Naive thymus-derived CD8-positive, alpha-beta T cell (primary cell): ENCODE measurements at regions of chr12 and their contacts with region 1.

Region 1: DNA sequence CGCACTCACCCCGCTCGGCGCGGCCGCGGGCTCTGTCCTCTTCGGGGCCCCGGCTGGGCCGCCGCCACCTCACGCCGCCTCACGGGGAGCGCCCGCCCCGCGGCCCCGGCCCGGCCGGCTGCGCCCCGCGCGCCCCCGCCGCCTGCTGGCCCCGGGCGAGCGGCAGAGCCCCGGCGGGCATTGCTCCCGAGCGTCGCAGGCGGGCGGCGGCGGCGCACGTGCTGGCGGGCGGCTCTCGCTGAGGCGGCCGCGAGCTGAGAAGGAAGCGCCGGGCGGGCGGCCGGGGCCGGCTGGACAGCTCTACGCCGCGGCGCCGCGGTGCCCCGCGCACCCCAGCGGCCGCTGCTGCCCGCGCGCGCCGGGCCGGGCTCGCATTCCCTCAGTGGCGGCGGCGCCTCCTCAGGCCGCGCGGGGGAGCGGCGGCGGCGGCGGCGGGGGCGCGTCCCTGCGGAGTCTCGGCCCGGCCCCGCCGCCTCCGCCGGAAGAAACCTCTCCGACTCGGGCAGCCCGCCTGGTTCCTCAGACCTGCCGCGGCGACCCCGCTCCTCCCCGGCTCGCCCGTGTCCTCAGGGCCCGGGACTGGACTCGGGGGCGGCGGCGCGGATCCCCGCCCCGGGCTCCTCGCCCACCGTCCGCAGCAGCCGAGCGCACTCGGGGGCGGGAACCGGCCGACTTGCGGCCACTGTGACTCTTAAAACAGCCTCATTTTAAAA is at the start of gene PITPNM2:
- DNase-seq: peak; percentile 47 to 76 (median 62)
- ATAC-seq: peak; percentile 87
- H3K4me3 Mint-ChIP-seq: peak within 1 kb of the TSS; percentile 73 to 93 (median 86)
- H3K27ac Mint-ChIP-seq: peak within 1 kb of the TSS; percentile 81 to 93 (median 91)
- H3K4me1 Mint-ChIP-seq: peaks cover 30 to 50% (median 46%) of the 10 kb centered on the region in 4 donors
- H3K27me3 Mint-ChIP-seq: no peaks in the 10 kb centered on the region
- polyA plus RNA-seq, gene PITPNM2: 4.0 to 6.3 (median 4.7) TPM

Region 2: DNA sequence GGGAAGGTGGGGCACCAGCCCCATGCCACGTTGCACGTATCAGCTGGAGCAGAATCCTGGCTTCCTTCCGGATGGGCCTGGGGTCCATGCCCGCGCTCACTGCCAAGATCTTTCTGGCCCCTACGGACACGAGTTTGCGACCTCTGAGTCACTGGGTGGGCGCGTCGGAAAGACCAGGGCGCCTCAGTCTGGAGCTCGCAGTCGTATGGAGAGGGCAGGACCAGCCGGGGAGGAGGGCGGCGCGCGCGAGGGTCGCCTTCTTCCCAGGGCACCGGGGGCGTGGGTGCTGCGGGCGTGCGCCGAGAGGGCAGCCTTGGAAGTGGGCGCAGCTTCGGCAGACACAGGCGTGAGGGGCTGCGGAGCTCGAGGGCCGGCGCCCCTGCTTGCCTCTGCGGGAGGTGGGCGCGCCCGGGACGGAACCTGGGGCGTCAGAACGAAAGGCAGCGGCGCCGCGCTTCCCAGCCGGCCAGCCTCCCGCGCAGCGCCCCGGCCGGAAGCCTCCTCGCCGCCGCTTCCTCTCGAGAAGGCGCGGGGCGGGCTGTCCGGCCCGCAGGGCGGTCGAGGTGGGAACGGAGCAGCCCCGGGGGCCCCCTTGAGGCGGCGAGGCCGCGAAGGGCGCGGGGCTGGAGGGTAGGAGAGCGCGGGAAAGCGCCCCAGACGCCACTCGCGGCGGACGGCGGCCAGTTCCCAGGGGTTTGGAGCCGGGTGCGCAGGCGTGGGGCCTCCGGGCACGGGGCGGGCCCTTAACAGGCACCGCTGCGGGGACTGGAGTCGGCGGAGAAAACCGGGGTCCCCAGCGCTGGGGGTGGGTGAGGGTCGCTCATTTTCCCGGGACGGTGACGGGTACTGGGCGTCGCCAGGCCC is 170.5 kb before region 1 on chr12 and contains the start of gene ARL6IP4:
- POLR2A ChIA-PET with region 1: interaction called, 12 read pairs
- DNase-seq: peak; percentile 42 to 79 (median 60)
- ATAC-seq: peak; percentile 78
- H3K4me3 Mint-ChIP-seq: peak within 1 kb of the TSS; percentile 85 to 92 (median 89)
- H3K27ac Mint-ChIP-seq: peak within 1 kb of the TSS; percentile 75 to 93 (median 90)
- H3K4me1 Mint-ChIP-seq: peaks cover 24 to 80% (median 68%) of the 10 kb centered on the region in 4 donors
- H3K27me3 Mint-ChIP-seq: no peaks in the 10 kb centered on the region
- polyA plus RNA-seq, gene ARL6IP4: 209 to 256 (median 222) TPM

Region 3: DNA sequence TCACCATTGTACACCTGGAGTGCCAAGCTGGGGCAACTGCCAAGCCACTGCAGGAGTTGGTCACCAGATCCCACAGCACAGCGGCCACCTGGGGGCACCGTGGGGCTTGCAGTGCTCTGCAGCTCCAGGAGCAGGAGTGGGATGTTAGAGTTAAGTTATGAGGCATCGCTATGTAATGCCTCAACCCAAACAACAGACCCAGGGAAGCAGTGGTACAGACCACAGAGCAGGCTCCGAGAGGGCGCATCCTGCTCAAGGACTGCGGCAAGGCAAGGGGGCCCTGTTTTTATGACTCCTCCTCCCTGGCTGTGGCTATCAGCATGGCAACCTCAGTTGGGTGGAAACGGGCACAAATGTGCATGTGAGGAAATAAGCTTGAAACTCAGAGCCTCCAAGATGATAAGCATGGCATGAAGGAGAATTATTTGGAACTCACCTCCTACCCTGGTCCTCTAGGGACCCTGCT is 107.3 kb before region 1 on chr12:
- POLR2A ChIA-PET with region 1: interaction called, 16 read pairs
- DNase-seq: peak; percentile 42 to 89 (median 70)
- ATAC-seq: peak; percentile 98 to 99
- H3K4me3 Mint-ChIP-seq: peak overlapping the region in 9 of 10 donors; percentile 11 to 77 (median 65)
- H3K27ac Mint-ChIP-seq: peak overlapping the region; percentile 88 to 99 (median 94)
- H3K4me1 Mint-ChIP-seq: peaks cover 29 to 50% (median 47%) of the 10 kb centered on the region in 4 donors
- H3K27me3 Mint-ChIP-seq: no peaks in the 10 kb centered on the region

Region 4: DNA sequence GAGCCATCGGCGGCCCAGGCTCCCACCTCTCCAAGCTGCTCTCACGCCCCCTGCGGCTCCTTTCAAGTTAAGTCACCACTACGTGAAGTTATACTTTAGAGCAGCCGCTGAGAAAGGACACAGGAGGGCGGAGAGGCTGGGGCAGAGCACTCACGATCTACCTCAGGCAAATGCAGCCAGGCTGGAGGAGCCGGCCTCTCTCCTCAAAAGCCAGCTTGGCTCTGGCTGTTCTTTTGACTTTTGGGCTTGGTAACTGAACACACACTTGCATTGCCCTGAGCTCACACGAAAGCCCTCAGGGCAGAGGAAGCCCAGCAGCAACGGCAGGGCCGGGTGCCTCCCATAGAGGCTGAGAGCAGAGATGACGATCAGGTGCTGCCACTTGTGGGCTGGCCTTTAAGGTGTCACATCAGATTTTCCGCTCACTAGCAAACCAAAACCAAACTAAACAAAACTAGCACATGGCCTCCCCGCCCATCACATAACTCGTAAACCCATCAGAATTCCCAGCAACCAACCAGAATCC is 75.2 kb before region 1 on chr12:
- POLR2A ChIA-PET with region 1: interaction called, 47 read pairs
- DNase-seq: peak; percentile 45 to 88 (median 73)
- ATAC-seq: peak; percentile 82 to 89
- H3K4me3 Mint-ChIP-seq: peak overlapping the region; percentile 82 to 98 (median 94)
- H3K27ac Mint-ChIP-seq: peak overlapping the region; percentile 94 to 99 (median 96)
- H3K4me1 Mint-ChIP-seq: peaks cover 35 to 78% (median 72%) of the 10 kb centered on the region in 4 donors
- H3K27me3 Mint-ChIP-seq: no peaks in the 10 kb centered on the region

Region 5: GRCh38 chr12:123106628-123107359 is 44.1 kb before region 1 on chr12:
- POLR2A ChIA-PET with region 1: interaction called, 16 read pairs
- DNase-seq: peak in 9 of 10 donors; percentile 23 to 78 (median 45)
- ATAC-seq: peak; percentile 91
- H3K4me3 Mint-ChIP-seq: peak overlapping the region; percentile 43 to 84 (median 76)
- H3K27ac Mint-ChIP-seq: peak overlapping the region; percentile 89 to 97 (median 96)
- H3K4me1 Mint-ChIP-seq: peaks cover 44 to 76% (median 72%) of the 10 kb centered on the region in 4 donors
- H3K27me3 Mint-ChIP-seq: no peaks in the 10 kb centered on the region

Region 6: GRCh38 chr12:123115409-123116121 is 35.3 kb before region 1 on chr12:
- POLR2A ChIA-PET with region 1: interaction called, 66 read pairs
- DNase-seq: peak in 5 of 10 donors; percentile 22 to 75 (median 63)
- ATAC-seq: peak; percentile 85 to 87
- H3K4me3 Mint-ChIP-seq: peak overlapping the region in 9 of 10 donors; percentile 40 to 64 (median 54)
- H3K27ac Mint-ChIP-seq: peak overlapping the region; percentile 89 to 97 (median 94)
- H3K4me1 Mint-ChIP-seq: peaks cover 34 to 93% (median 78%) of the 10 kb centered on the region in 4 donors
- H3K27me3 Mint-ChIP-seq: no peaks in the 10 kb centered on the region

Region 7: DNA sequence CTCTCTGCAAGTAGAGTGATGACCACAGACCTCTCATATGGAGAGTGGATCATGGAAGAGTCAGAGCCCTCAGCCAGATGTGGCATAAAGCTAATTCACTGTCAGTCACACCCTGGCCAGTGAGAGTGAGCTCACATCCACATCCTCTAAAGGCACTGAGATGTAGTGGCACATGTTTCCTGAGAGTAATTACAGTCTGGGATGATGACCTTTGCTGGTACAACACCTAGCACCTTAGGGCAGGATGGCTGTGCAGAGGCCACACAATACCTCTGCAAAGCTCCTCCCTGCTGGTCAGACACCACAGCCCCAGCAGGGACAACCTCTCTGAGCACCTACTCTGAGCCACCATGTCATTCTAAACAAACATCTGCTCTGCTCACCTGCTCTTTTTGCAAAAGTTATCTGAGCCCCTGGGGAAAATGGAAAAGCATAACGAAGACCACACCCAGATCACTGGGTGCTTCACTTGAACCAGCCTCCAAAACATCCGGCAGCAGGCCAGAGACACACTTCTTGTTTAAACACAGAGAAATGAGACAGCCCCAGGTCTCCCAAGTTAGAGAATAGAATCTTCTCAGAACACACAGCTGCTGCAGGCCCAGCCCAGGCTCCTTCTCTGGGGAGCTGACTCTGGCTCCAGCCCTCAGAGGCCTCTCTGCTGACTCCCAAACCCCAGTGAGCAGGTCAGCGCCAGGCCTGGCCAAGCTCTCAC is 30.3 kb before region 1 on chr12:
- POLR2A ChIA-PET with region 1: interaction called, 66 read pairs
- DNase-seq: peak in 5 of 10 donors; percentile 23 to 77 (median 55)
- ATAC-seq: peak; percentile 61 to 79
- H3K4me3 Mint-ChIP-seq: peak overlapping the region; percentile 44 to 82 (median 66)
- H3K27ac Mint-ChIP-seq: peak overlapping the region; percentile 92 to 97 (median 96)
- H3K4me1 Mint-ChIP-seq: peaks cover 42 to 75% (median 73%) of the 10 kb centered on the region in 4 donors
- H3K27me3 Mint-ChIP-seq: no peaks in the 10 kb centered on the region